ENCODE measurements at regions of chr12 and their contacts with region 1.

Region 1: DNA sequence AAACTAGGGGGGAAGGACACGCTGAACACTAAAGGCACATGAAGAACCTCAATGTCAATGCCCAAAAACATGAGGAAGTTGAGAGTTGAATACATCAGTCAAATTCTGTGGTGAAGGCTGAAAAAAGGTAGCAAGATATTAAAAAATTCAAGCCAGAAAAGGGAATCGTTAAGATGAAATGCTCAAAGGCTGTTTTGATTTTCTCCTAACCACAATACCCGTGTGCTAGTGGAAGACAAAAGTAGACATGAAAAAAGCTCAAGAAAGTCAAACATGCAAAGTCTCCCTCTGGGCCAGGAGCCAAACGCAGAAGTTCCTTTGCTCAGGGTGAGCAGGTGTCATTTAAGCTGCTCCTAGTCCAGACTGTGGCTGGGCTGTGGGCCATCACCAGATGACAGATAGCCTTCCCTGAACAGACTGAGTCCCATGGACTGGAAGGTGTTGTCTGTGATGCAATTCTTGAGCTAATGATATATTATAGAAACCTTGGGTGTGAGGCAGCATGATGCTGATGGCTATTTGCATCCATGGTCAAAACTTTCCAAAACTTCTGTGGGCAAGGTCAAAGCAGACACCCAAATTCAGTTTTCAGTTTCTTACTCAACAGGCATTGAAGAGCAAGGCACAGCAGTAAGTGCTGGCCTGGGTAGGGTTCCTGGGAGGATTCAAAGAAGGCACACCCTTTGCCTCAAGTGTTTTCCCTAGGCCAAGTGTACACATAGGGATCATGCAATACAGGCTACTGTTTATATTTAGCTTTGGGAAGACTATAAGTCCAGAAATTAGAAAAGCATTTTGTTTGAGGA is 81.6 kb downstream of the MYRFL start:
- DNase-seq: no peak
- ATAC-seq: no peak
- H3K4me3 ChIP-seq: no peak overlapping the region
- H3K4me3 Mint-ChIP-seq: no peak overlapping the region
- H3K27ac ChIP-seq: no peak overlapping the region
- H3K27ac Mint-ChIP-seq: no peak overlapping the region
- H3K4me1 ChIP-seq: no peaks in the 10 kb centered on the region
- H3K4me1 Mint-ChIP-seq: no peaks in the 10 kb centered on the region
- H3K27me3 ChIP-seq: no peaks in the 10 kb centered on the region
- H3K27me3 Mint-ChIP-seq: peaks cover 3% of the 10 kb centered on the region in 2 donors

Region 2: DNA sequence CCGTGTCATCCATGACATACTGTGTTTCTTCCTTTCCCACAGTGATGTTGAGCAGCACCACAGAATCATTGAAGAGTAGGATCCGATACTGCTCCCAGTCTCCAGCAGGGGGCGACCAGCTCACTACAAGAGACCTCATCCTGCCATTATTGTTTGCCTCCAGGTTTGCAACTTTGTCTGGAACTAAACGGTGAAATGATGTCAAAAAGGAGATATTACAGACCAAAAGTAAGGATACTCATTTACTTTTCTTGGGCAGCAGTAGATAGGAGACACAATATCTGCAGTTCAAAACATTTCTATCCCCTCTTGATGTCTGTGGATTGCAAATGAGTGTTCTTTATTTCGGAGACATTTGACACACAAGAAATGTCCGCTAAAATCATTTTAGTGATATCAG is 683.4 kb after region 1 on chr12:
- CTCF ChIA-PET with region 1: interaction called in 1 of 2 experiments, 13 read pairs
- POLR2A ChIA-PET with region 1: no interaction called
- DNase-seq: peak in 30 of 35 experiments; percentile 3 to 55 (median 29)
- ATAC-seq: peak in 3 of 4 experiments; percentile 38 to 73 (median 45)
- H3K4me3 ChIP-seq: no peak overlapping the region
- H3K4me3 Mint-ChIP-seq: no peak overlapping the region
- H3K27ac ChIP-seq: no peak overlapping the region
- H3K27ac Mint-ChIP-seq: no peak overlapping the region
- H3K4me1 ChIP-seq: no peaks in the 10 kb centered on the region
- H3K4me1 Mint-ChIP-seq: no peaks in the 10 kb centered on the region
- H3K27me3 ChIP-seq: no peaks in the 10 kb centered on the region
- H3K27me3 Mint-ChIP-seq: peaks cover 22 to 26% of the 10 kb centered on the region in 2 donors